ENCODE measurements at regions of chr2 and their contacts with region 1.

Region 1: GRCh38 chr2:65626831-65627230 is 194.4 kb upstream of the SPRED2 start:
- DNase-seq: no peak
- ATAC-seq: no peak
- H3K4me3 Mint-ChIP-seq: no peak overlapping the region
- H3K27ac Mint-ChIP-seq: no peak overlapping the region
- H3K4me1 Mint-ChIP-seq: no peaks in the 10 kb centered on the region
- H3K27me3 Mint-ChIP-seq: peaks cover 23% of the 10 kb centered on the region

Region 2: GRCh38 chr2:65640793-65641103 is 13.9 kb after region 1 on chr2:
- CTCF ChIA-PET with region 1: interaction called, 10 read pairs
- DNase-seq: no peak
- ATAC-seq: no peak
- H3K4me3 Mint-ChIP-seq: no peak overlapping the region
- H3K27ac Mint-ChIP-seq: no peak overlapping the region
- H3K4me1 Mint-ChIP-seq: peaks cover 2% of the 10 kb centered on the region
- H3K27me3 Mint-ChIP-seq: peaks cover 11% of the 10 kb centered on the region

Region 3: GRCh38 chr2:65800998-65801397 is 174.2 kb after region 1 on chr2:
- CTCF ChIA-PET with region 1: no interaction called
- DNase-seq: no peak
- ATAC-seq: no peak
- H3K4me3 Mint-ChIP-seq: no peak overlapping the region
- H3K27ac Mint-ChIP-seq: no peak overlapping the region
- H3K4me1 Mint-ChIP-seq: no peaks in the 10 kb centered on the region
- H3K27me3 Mint-ChIP-seq: no peaks in the 10 kb centered on the region